Natural killer cell (primary cell): ENCODE measurements at regions of chr3 and their contacts with region 1.

Region 1: GRCh38 chr3:33717866-33718594 is at the start of gene CLASP2:
- DNase-seq: peak; percentile 85 to 94
- ATAC-seq: peak; percentile 81 to 91 (median 87)
- H3K4me3 ChIP-seq: peak within 1 kb of the TSS; percentile 64
- H3K4me3 Mint-ChIP-seq: no peak within 1 kb of the TSS
- H3K27ac ChIP-seq: peak within 1 kb of the TSS; percentile 93
- H3K27ac Mint-ChIP-seq: no peak within 1 kb of the TSS
- H3K4me1 ChIP-seq: peaks cover 13% of the 10 kb centered on the region
- H3K4me1 Mint-ChIP-seq: peaks cover 6 to 10% of the 10 kb centered on the region in 2 donors
- H3K27me3 ChIP-seq: no peaks in the 10 kb centered on the region
- H3K27me3 Mint-ChIP-seq: peaks cover 4 to 20% of the 10 kb centered on the region in 2 donors
- CTCF ChIP-seq: no peak
- total RNA-seq, gene CLASP2: 93.8 to 109 (median 99.3) TPM

Region 2: GRCh38 chr3:33658991-33659848 is 58.8 kb before region 1 on chr3:
- intact Hi-C with region 1: loop called (anchors 1 kb)
- DNase-seq: peak; percentile 39 to 63
- ATAC-seq: peak; percentile 85 to 92 (median 87)
- H3K4me3 ChIP-seq: peak overlapping the region; percentile 41
- H3K4me3 Mint-ChIP-seq: peak overlapping the region; percentile 88
- H3K27ac ChIP-seq: peak overlapping the region; percentile 68
- H3K27ac Mint-ChIP-seq: peak overlapping the region; percentile 63 to 72
- H3K4me1 ChIP-seq: peaks cover 8% of the 10 kb centered on the region
- H3K4me1 Mint-ChIP-seq: peaks cover 34% of the 10 kb centered on the region in 2 donors
- H3K27me3 ChIP-seq: no peaks in the 10 kb centered on the region
- H3K27me3 Mint-ChIP-seq: no peaks in the 10 kb centered on the region
- CTCF ChIP-seq: no peak

Region 3: DNA sequence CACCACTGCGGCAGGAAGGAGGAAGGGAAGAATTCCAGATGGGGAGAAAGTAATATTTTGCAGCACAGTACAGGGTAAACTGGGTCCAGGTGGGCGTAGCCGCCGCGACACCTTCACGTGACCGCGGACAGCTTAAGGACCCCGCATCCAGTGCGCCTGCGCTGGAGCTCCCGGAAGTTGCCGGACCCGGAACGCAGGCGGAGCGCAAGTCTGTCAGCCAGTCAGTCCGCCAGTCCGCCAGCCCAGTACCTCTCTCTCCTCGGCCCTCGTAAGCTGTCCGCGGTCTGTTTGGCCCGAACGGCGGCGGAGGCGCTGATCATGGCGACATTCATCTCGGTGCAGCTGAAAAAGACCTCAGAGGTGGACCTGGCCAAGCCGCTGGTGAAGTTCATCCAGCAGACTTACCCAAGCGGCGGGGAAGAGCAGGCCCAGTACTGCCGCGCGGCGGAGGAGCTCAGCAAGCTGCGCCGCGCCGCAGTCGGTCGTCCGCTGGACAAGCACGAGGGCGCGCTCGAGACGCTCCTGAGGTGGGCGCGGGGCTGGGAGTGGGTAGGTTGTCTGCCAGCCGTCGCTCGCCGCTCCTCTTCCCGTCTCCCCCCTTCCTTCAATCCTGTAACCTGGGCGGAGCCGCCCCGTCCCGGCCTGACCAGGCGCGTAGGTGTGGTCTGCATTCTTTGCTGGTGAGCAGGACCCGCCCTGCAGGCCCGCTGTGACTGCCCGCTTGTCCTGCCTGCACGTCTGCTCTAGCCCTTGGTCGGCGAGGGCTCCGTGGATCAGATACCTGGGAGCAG is 80.6 kb after region 1 on chr3 and contains the start of gene PDCD6IP:
- intact Hi-C with region 1: loop called (anchors 2 kb)
- DNase-seq: peak; percentile 89 to 94
- ATAC-seq: peak; percentile 87 to 93 (median 92)
- H3K4me3 ChIP-seq: peak within 1 kb of the TSS; percentile 69
- H3K4me3 Mint-ChIP-seq: peak within 1 kb of the TSS; percentile 96
- H3K27ac ChIP-seq: peak within 1 kb of the TSS; percentile 74
- H3K27ac Mint-ChIP-seq: peak within 1 kb of the TSS; percentile 92 to 94
- H3K4me1 ChIP-seq: peaks cover 20% of the 10 kb centered on the region
- H3K4me1 Mint-ChIP-seq: peaks cover 50 to 53% of the 10 kb centered on the region in 2 donors
- H3K27me3 ChIP-seq: no peaks in the 10 kb centered on the region
- H3K27me3 Mint-ChIP-seq: no peaks in the 10 kb centered on the region
- CTCF ChIP-seq: no peak
- total RNA-seq, gene PDCD6IP: 170 to 182 (median 179) TPM